Activated naive CD4-positive, alpha-beta T cell treated with anti-CD3 and anti-CD28 coated beads for 36 hours (primary cell): ENCODE measurements at regions of chr1 and their contacts with region 1.

Region 1: GRCh38 chr1:192445848-192446489 is 129.2 kb downstream of the RGS21 start:
- DNase-seq: peak; percentile 74
- H3K4me3 Mint-ChIP-seq: no peak overlapping the region
- H3K27ac Mint-ChIP-seq: no peak overlapping the region
- H3K4me1 Mint-ChIP-seq: no peaks in the 10 kb centered on the region
- H3K27me3 Mint-ChIP-seq: peaks cover 8% of the 10 kb centered on the region

Region 2: GRCh38 chr1:191993549-191993948 is 452.4 kb before region 1 on chr1:
- CTCF ChIA-PET with region 1: no interaction called
- intact Hi-C with region 1: loop called (anchors 10 kb)
- DNase-seq: no peak
- H3K4me3 Mint-ChIP-seq: no peak overlapping the region
- H3K27ac Mint-ChIP-seq: no peak overlapping the region
- H3K4me1 Mint-ChIP-seq: no peaks in the 10 kb centered on the region
- H3K27me3 Mint-ChIP-seq: no peaks in the 10 kb centered on the region

Region 3: GRCh38 chr1:192284927-192285326 is 161.0 kb before region 1 on chr1:
- CTCF ChIA-PET with region 1: no interaction called
- intact Hi-C with region 1: loop called (anchors 5 kb)
- DNase-seq: no peak
- H3K4me3 Mint-ChIP-seq: no peak overlapping the region
- H3K27ac Mint-ChIP-seq: no peak overlapping the region
- H3K4me1 Mint-ChIP-seq: no peaks in the 10 kb centered on the region
- H3K27me3 Mint-ChIP-seq: no peaks in the 10 kb centered on the region

Region 4: DNA sequence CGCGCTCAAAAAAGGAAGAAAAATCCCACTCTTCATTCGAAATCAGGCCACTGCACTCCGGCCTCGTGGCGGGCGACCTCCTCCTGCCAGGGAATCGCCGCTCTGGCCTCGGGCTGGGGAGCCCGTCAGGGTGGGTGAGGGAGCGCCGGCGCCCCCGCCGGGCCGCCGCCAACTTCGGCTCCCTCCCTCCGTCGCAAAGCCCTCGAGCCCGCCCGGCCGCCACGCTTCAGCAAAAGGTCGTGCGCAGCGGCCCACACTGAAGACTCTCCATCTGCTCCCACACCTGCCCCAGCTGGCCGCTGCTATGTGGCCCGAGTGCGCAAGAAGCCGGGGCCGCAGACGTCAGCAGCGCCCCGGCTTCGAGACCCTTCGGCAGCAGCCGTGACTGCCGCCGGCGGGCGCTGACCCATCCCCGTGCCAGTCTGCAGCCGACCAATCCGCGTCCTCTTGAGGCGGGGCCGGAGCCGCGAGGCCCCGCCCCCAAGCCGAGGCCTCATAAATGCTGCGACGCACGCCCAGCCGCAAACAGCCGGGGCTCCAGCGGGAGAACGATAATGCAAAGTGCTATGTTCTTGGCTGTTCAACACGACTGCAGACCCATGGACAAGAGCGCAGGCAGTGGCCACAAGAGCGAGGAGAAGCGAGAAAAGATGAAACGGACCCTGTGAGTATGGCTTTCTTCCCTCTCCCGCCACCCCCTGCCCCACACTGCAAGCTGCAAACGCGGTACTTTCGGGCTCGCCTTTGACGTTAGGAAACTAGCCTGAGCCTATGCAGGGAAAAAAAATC is 362.7 kb after region 1 on chr1 and contains the start of gene RGS2:
- CTCF ChIA-PET with region 1: no interaction called
- intact Hi-C with region 1: no loop called
- DNase-seq: peak; percentile 86
- H3K4me3 Mint-ChIP-seq: peak within 1 kb of the TSS; percentile 96
- H3K27ac Mint-ChIP-seq: peak within 1 kb of the TSS; percentile 82
- H3K4me1 Mint-ChIP-seq: peaks cover 31% of the 10 kb centered on the region
- H3K27me3 Mint-ChIP-seq: peaks cover 2% of the 10 kb centered on the region
- total RNA-seq, gene RGS2: 11.7 to 11.8 TPM